HCT116 (cell line): ENCODE measurements at regions of chr9 and their contacts with region 1.

Region 1: DNA sequence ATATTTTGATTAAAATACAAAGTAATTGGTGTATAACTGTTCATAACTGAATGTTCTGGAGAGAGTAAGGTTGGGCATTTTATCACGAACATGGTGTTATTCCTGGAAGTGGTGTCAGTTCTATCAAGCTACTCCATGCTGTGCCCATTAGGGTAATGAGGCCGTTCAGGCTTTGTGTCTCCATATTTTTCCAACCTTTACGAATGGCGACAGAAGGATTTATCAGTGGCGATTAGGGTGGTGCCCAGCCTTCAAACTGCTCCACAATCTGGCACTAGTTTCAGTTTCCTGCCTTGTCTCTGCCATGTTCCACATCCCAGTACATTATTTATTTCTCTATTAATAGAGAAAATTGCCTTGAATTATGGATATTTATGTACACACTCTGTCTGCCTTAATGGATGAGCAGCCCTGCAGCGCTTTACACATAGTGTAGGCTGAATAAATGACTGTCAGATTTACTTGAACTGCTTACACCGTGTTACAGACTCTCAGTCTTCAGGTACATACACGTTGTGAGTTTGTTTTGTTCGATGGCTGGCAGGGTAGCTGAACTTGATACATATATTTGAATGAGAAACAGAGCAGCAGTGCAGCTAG is 23.9 kb upstream of the TMC1 start:
- DNase-seq: no peak
- ATAC-seq: no peak
- H3K4me3 ChIP-seq: no peak overlapping the region
- H3K27ac ChIP-seq: no peak overlapping the region
- H3K4me1 ChIP-seq: no peaks in the 10 kb centered on the region
- H3K27me3 ChIP-seq: no peaks in the 10 kb centered on the region
- CTCF ChIP-seq: no peak
- POLR2A ChIP-seq: no peak
- RAD21 ChIP-seq: no peak

Region 2: DNA sequence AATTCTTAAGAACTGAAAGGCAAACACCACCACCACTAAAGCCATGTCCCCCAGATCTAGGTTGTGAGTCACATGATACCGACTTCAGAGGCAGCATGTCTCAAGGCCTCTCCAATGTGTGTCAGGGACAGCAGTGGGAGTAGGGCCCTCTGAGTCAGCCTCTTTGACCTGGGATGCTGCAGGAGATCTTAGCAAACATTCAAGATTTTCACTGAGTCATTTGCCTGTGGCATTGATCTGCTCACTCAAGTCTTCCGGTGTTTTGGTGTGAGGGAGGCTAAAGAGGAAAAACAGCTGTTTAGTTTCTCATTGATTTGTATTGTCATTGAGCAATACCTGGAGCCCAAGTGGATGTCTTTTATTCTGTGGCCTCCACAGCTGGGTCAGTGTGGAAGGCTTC is 60.0 kb after region 1 on chr9:
- CTCF ChIA-PET with region 1: no interaction called
- POLR2A ChIA-PET with region 1: no interaction called
- RAD21 ChIA-PET with region 1: no interaction called
- intact Hi-C with region 1: loop called (anchors 10 kb)
- DNase-seq: peak; percentile 94
- ATAC-seq: peak; percentile 96
- H3K4me3 ChIP-seq: no peak overlapping the region; a peak in 1 of 4 replicates
- H3K27ac ChIP-seq: peak overlapping the region; percentile 24
- H3K4me1 ChIP-seq: peaks cover 27 to 42% of the 10 kb centered on the region in 2 experiments
- H3K27me3 ChIP-seq: no peaks in the 10 kb centered on the region
- CTCF ChIP-seq: no peak
- POLR2A ChIP-seq: no peak
- RAD21 ChIP-seq: peak; percentile 57